HCT116 (cell line): ENCODE measurements at regions of chr11 and their contacts with region 1.

Region 1: DNA sequence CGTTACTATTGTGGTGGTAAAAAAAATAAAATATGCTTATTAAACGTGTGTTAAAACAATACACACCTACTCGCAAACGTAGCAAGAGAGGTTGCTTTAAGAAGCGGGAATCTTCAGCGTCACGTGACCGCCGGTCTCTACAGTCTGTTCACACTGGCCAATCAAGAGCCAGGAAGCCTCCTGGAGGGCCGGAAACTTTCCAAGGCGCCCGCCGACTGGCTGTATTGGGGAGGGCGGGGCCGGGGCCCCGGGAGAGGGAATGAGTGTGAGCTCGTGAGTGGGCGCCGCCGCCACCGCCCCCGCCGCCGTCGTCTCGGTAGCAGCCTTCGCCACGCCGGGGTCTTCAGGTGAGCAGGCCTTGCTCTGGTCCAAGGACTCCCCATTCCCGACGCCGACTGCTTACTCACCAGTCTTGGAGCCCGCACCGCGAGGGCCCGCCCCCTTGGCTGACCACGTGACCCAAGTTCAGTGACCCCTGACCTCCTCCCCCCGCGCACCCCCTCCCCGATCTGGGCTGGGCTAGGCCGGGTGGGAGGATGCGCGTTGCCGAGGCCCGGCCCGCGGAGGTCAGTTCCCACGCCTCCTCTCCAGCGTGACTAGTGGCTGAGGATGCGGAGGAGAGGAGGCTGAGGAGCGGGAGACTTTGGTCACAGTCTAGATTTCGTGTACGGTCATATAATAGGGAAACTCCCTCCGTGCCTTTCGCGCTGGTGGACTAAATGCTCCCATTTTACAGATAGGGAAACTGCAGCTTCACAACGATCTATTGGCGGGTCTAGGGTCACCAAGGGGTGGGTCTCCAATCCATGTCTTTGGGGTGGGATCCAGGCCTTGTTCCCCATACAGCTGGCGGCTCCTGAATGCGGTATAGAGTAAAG is at the start of gene TAF6L:
- DNase-seq: peak; percentile 93
- ATAC-seq: peak; percentile 94
- H3K4me3 ChIP-seq: peak within 1 kb of the TSS; percentile 67 to 69
- H3K27ac ChIP-seq: peak within 1 kb of the TSS; percentile 74
- H3K4me1 ChIP-seq: peaks cover 7 to 24% of the 10 kb centered on the region in 2 experiments; a peak in 3 of 4 replicates
- H3K27me3 ChIP-seq: no peaks in the 10 kb centered on the region
- CTCF ChIP-seq: no peak
- POLR2A ChIP-seq: peak; percentile 7
- RAD21 ChIP-seq: no peak
- total RNA-seq, gene TAF6L: 24.2 TPM

Region 2: GRCh38 chr11:62508268-62509058 is 262.9 kb before region 1 on chr11:
- CTCF ChIA-PET with region 1: no interaction called
- POLR2A ChIA-PET with region 1: no interaction called
- RAD21 ChIA-PET with region 1: no interaction called
- intact Hi-C with region 1: no loop called
- DNase-seq: peak; percentile 39
- ATAC-seq: peak; percentile 95
- H3K4me3 ChIP-seq: peak overlapping the region; percentile 28 to 43
- H3K27ac ChIP-seq: peak overlapping the region; percentile 37
- H3K4me1 ChIP-seq: peaks cover 11 to 28% of the 10 kb centered on the region in 2 experiments
- H3K27me3 ChIP-seq: no peaks in the 10 kb centered on the region
- CTCF ChIP-seq: peak in 2 of 3 experiments; percentile 60 to 77; a peak in 5 of 6 replicates
- POLR2A ChIP-seq: no peak
- RAD21 ChIP-seq: no peak

Region 3: DNA sequence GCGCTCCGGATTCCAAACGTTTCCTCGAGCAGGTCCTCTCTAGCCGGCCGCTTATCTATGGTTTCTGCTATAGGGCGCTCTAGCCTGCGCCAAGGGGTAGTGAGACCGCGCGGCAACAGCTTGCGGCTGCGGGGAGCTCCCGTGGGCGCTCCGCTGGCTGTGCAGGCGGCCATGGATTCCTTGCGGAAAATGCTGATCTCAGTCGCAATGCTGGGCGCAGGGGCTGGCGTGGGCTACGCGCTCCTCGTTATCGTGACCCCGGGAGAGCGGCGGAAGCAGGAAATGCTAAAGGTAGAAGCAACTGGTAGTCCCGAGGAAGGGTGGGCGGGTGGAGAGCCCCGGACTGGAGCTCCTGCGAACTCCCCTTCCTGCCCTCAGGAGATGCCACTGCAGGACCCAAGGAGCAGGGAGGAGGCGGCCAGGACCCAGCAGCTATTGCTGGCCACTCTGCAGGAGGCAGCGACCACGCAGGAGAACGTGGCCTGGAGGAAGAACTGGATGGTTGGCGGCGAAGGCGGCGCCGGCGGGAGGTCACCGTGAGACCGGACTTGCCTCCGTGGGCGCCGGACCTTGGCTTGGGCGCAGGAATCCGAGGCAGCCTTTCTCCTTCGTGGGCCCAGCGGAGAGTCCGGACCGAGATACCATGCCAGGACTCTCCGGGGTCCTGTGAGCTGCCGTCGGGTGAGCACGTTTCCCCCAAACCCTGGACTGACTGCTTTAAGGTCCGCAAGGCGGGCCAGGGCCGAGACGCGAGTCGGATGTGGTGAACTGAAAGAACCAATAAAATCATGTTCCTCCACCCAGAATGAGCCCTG is 99.6 kb before region 1 on chr11 and contains the starts of genes LBHD1 and UQCC3:
- CTCF ChIA-PET with region 1: no interaction called
- POLR2A ChIA-PET with region 1: interaction called, 4 read pairs
- RAD21 ChIA-PET with region 1: no interaction called
- intact Hi-C with region 1: loop called (anchors 10 kb)
- DNase-seq: peak; percentile 79
- ATAC-seq: peak; percentile 62
- H3K4me3 ChIP-seq: peak within 1 kb of the TSS; percentile 96 to 97
- H3K27ac ChIP-seq: peak within 1 kb of the TSS; percentile 98
- H3K4me1 ChIP-seq: peaks cover 35 to 59% of the 10 kb centered on the region in 2 experiments
- H3K27me3 ChIP-seq: no peaks in the 10 kb centered on the region
- CTCF ChIP-seq: no peak
- POLR2A ChIP-seq: peak; percentile 63
- RAD21 ChIP-seq: no peak
- total RNA-seq, gene LBHD1: 14.7 TPM
- total RNA-seq, gene UQCC3: 17.9 TPM

Region 4: DNA sequence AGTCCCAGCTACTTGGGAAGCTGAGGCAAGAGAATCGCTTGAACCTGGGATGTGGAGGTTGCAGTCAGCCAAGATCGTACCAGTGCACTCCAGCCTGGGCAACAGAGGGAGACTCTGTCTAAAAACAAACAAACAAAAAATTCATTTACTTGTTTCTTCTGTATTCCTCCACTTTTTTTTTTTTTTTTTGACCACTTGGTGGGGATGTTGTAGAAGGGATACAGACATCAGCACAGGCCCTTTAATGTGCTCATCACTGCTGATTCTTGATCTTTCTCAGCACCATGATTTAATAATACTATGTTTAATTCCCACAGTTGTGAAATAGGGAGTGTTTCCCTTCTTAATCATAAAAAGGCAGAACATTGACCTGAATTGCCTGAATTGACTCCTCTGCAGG is 38.6 kb before region 1 on chr11:
- CTCF ChIA-PET with region 1: interaction called, 3 read pairs
- POLR2A ChIA-PET with region 1: interaction called, 5 read pairs
- RAD21 ChIA-PET with region 1: no interaction called
- intact Hi-C with region 1: loop called (anchors 1 kb)
- DNase-seq: no peak
- ATAC-seq: no peak
- H3K4me3 ChIP-seq: no peak overlapping the region
- H3K27ac ChIP-seq: no peak overlapping the region
- H3K4me1 ChIP-seq: peaks cover 6 to 10% of the 10 kb centered on the region in 2 experiments; a peak in 3 of 4 replicates
- H3K27me3 ChIP-seq: no peaks in the 10 kb centered on the region
- CTCF ChIP-seq: peak; percentile 21 to 59 (median 33); a peak in 4 of 6 replicates
- POLR2A ChIP-seq: no peak
- RAD21 ChIP-seq: peak; percentile 65

Region 5: GRCh38 chr11:62753736-62754603 is 17.4 kb before region 1 on chr11 and contains the start of gene ZBTB3:
- CTCF ChIA-PET with region 1: interaction called, 21 read pairs
- POLR2A ChIA-PET with region 1: interaction called, 16 read pairs
- RAD21 ChIA-PET with region 1: no interaction called
- intact Hi-C with region 1: no loop called
- DNase-seq: peak; percentile 99
- ATAC-seq: peak; percentile 96
- H3K4me3 ChIP-seq: peak within 1 kb of the TSS; percentile 70 to 84
- H3K27ac ChIP-seq: peak within 1 kb of the TSS; percentile 76
- H3K4me1 ChIP-seq: peaks cover 4 to 18% of the 10 kb centered on the region in 2 experiments; a peak in 3 of 4 replicates
- H3K27me3 ChIP-seq: no peaks in the 10 kb centered on the region
- CTCF ChIP-seq: no peak
- POLR2A ChIP-seq: peak; percentile 86
- RAD21 ChIP-seq: no peak
- total RNA-seq, gene ZBTB3: 11.3 TPM

Region 6: DNA sequence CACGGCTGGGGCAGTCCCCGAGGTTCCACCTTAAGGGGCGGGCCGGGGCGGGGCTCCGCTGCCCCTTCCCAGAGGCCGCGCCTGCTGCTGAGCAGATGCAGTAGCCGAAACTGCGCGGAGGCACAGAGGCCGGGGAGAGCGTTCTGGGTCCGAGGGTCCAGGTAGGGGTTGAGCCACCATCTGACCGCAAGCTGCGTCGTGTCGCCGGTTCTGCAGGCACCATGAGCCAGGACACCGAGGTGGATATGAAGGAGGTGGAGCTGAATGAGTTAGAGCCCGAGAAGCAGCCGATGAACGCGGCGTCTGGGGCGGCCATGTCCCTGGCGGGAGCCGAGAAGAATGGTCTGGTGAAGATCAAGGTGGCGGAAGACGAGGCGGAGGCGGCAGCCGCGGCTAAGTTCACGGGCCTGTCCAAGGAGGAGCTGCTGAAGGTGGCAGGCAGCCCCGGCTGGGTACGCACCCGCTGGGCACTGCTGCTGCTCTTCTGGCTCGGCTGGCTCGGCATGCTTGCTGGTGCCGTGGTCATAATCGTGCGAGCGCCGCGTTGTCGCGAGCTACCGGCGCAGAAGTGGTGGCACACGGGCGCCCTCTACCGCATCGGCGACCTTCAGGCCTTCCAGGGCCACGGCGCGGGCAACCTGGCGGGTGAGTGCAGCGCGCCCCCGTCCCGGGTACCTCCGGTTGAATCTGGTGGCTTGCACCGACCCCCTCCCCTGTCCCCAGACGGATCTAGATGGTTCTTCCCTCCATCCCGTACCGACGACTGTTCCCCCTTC is 109.6 kb after region 1 on chr11 and contains the start of gene SLC3A2:
- CTCF ChIA-PET with region 1: no interaction called
- POLR2A ChIA-PET with region 1: no interaction called
- RAD21 ChIA-PET with region 1: no interaction called
- intact Hi-C with region 1: no loop called
- DNase-seq: peak; percentile 68
- ATAC-seq: peak; percentile 87
- H3K4me3 ChIP-seq: peak within 1 kb of the TSS; percentile 75 to 85
- H3K27ac ChIP-seq: peak within 1 kb of the TSS; percentile 96
- H3K4me1 ChIP-seq: peaks cover 38 to 74% of the 10 kb centered on the region in 2 experiments
- H3K27me3 ChIP-seq: no peaks in the 10 kb centered on the region
- CTCF ChIP-seq: peak in 2 of 3 experiments; percentile 47 to 52; a peak in 4 of 6 replicates
- POLR2A ChIP-seq: peak; percentile 98
- RAD21 ChIP-seq: no peak
- total RNA-seq, gene SLC3A2: 418 TPM